ENCODE measurements at regions of chr2 and their contacts with region 1.

Region 1: DNA sequence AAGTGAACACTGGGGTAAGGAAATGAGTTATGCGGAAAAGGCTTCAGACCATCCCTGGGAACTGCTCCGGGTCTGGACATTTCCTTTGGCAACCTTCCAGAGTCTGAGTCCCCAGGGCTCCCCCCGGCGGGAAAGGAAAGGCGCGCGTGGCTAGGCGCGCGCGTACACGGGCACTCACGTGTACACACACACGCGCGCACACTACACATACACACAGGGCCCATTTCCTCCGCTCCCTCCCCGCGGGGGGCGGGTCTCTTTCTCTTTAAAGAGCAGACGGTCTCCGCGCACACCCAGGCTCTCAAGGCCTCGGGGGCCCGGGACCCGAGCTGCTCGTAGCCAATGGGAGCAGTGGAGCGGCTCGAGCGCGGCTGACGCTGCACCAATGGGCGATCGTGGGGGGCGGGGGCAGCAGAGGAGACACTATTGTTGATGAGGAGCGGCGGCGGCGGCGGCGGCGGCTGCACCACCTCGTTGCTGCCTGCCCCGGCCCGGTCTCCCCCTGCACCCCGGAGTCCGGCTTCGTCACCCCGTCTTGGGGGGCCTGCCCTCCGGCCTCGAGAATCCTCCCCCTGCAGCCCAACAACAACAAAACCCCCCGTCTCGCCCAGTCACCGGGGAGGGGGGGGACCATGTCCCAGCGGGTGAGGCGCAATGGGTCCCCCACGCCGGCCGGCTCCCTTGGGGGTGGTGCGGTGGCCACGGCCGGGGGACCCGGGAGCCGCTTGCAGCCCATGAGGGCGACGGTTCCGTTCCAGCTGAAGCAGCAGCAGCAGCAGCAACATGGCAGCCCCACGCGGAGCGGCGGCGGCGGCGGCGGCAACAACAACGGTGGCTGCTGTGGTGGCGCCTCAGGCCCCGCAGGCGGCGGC is at the start of gene FAM117B:
- DNase-seq: peak; percentile 99
- ATAC-seq: peak; percentile 88
- H3K4me3 Mint-ChIP-seq: peak within 1 kb of the TSS; percentile 83
- H3K27ac Mint-ChIP-seq: peak within 1 kb of the TSS; percentile 93
- H3K4me1 Mint-ChIP-seq: peaks cover 48% of the 10 kb centered on the region
- H3K27me3 Mint-ChIP-seq: no peaks in the 10 kb centered on the region
- total RNA-seq, gene FAM117B: 15.3 to 16.6 TPM

Region 2: GRCh38 chr2:201182650-201183364 is 1452.0 kb before region 1 on chr2 and contains the start of gene CASP10:
- CTCF ChIA-PET with region 1: no interaction called
- POLR2A ChIA-PET with region 1: no interaction called
- intact Hi-C with region 1: loop called in 1 of 2 experiments (anchors 5 kb)
- DNase-seq: no peak
- ATAC-seq: peak; percentile 66
- H3K4me3 Mint-ChIP-seq: peak within 1 kb of the TSS; percentile 86
- H3K27ac Mint-ChIP-seq: peak within 1 kb of the TSS; percentile 96
- H3K4me1 Mint-ChIP-seq: peaks cover 43% of the 10 kb centered on the region
- H3K27me3 Mint-ChIP-seq: no peaks in the 10 kb centered on the region
- total RNA-seq, gene CASP10: 12.2 to 16.8 TPM

Region 3: GRCh38 chr2:202278944-202279343 is 355.8 kb before region 1 on chr2:
- CTCF ChIA-PET with region 1: no interaction called
- POLR2A ChIA-PET with region 1: no interaction called
- intact Hi-C with region 1: loop called in 1 of 2 experiments (anchors 10 kb)
- DNase-seq: no peak
- ATAC-seq: no peak
- H3K4me3 Mint-ChIP-seq: no peak overlapping the region
- H3K27ac Mint-ChIP-seq: peak overlapping the region; percentile 84
- H3K4me1 Mint-ChIP-seq: peaks cover 46% of the 10 kb centered on the region
- H3K27me3 Mint-ChIP-seq: no peaks in the 10 kb centered on the region

Region 4: GRCh38 chr2:202335791-202336467 is 298.9 kb before region 1 on chr2:
- CTCF ChIA-PET with region 1: no interaction called
- POLR2A ChIA-PET with region 1: no interaction called
- intact Hi-C with region 1: no loop called
- DNase-seq: no peak
- ATAC-seq: no peak
- H3K4me3 Mint-ChIP-seq: no peak overlapping the region
- H3K27ac Mint-ChIP-seq: no peak overlapping the region
- H3K4me1 Mint-ChIP-seq: no peaks in the 10 kb centered on the region
- H3K27me3 Mint-ChIP-seq: no peaks in the 10 kb centered on the region

Region 5: GRCh38 chr2:202406445-202406967 is 228.3 kb before region 1 on chr2:
- CTCF ChIA-PET with region 1: no interaction called
- POLR2A ChIA-PET with region 1: no interaction called
- intact Hi-C with region 1: no loop called
- DNase-seq: no peak
- ATAC-seq: no peak
- H3K4me3 Mint-ChIP-seq: no peak overlapping the region
- H3K27ac Mint-ChIP-seq: no peak overlapping the region
- H3K4me1 Mint-ChIP-seq: peaks cover 3% of the 10 kb centered on the region
- H3K27me3 Mint-ChIP-seq: no peaks in the 10 kb centered on the region

Region 6: GRCh38 chr2:202671317-202672035 is 36.7 kb after region 1 on chr2:
- CTCF ChIA-PET with region 1: interaction called, 5 read pairs
- POLR2A ChIA-PET with region 1: interaction called, 9 read pairs
- intact Hi-C with region 1: loop called (anchors 2 kb)
- DNase-seq: no peak
- ATAC-seq: no peak
- H3K4me3 Mint-ChIP-seq: no peak overlapping the region
- H3K27ac Mint-ChIP-seq: no peak overlapping the region
- H3K4me1 Mint-ChIP-seq: peaks cover 78% of the 10 kb centered on the region
- H3K27me3 Mint-ChIP-seq: no peaks in the 10 kb centered on the region

Region 7: DNA sequence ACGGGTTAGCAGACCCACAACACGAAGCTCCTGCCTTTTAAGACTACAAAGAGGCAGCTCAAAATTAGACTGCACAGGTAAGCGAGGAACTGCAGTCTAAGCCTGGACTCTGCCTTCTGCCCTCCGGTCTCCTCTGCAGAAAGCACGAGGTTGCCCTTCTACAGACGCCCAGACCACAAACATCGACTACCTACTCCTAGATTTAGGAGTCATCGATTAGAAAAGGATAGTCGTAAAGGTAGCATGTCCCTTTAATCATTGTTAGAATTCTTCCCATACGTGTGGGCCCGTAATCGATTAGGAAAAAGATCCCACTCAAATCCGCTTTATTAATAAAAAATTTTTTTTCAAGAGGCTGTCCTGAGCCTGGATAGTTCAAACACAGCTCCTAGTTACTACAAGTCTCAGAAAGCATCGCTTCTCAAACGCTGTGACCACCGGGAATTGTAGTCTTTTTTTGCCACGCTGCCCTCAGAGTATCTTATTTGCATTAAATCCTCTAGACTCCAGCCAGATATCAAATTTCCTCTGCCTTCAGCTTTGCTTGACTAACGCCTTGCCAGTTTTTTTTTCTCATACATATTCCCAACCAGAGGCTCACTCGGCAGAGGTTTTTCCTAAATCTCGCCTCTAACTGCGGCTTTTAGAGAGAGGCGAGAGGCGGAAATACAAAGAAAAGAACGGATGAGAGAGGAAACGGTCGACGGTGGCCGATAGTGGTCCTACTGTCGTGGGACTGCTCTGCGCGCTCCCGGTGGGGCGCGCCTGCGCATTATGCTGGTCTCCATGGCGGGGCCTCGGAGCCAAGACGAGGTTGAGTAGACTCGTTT is 276.9 kb after region 1 on chr2 and contains the starts of genes CARF and WDR12:
- CTCF ChIA-PET with region 1: interaction called, 3 read pairs
- POLR2A ChIA-PET with region 1: interaction called, 4 read pairs
- intact Hi-C with region 1: loop called in 1 of 2 experiments (anchors 1 kb)
- DNase-seq: peak; percentile 96
- ATAC-seq: peak; percentile 84
- H3K4me3 Mint-ChIP-seq: peak within 1 kb of the TSS; percentile 84
- H3K27ac Mint-ChIP-seq: peak within 1 kb of the TSS; percentile 95
- H3K4me1 Mint-ChIP-seq: peaks cover 30% of the 10 kb centered on the region
- H3K27me3 Mint-ChIP-seq: no peaks in the 10 kb centered on the region
- total RNA-seq, gene CARF: 6.2 to 9.0 TPM
- total RNA-seq, gene WDR12: 92.5 to 129 TPM

Region 8: DNA sequence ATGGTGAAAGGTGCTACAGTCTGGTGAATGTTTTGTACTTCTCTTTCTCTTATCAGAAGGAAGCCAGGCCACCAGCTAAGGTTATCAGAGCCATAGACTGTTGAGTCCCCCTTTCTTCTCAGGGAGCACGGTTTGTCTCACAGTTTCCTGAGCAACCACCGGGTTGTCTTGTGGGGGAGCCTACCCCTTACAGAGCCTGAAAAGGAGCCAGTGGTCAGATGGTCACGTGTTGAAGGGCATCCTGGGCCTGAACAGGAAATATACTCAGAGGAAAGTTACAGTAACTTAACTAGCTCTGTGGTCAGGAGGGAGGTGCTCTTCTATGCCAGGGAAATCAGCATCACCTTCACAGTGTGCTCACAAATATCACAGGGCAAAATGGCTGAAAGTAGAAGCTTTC is 1083.3 kb after region 1 on chr2:
- CTCF ChIA-PET with region 1: no interaction called
- POLR2A ChIA-PET with region 1: no interaction called
- intact Hi-C with region 1: loop called in 1 of 2 experiments (anchors 10 kb)
- DNase-seq: peak; percentile 77
- ATAC-seq: peak; percentile 63
- H3K4me3 Mint-ChIP-seq: peak overlapping the region; percentile 63
- H3K27ac Mint-ChIP-seq: peak overlapping the region; percentile 95
- H3K4me1 Mint-ChIP-seq: peaks cover 97% of the 10 kb centered on the region
- H3K27me3 Mint-ChIP-seq: no peaks in the 10 kb centered on the region

Region 9: GRCh38 chr2:203940039-203940438 is 1305.2 kb after region 1 on chr2:
- CTCF ChIA-PET with region 1: no interaction called
- POLR2A ChIA-PET with region 1: no interaction called
- intact Hi-C with region 1: loop called in 1 of 2 experiments (anchors 2 kb)
- DNase-seq: no peak
- ATAC-seq: peak; percentile 7
- H3K4me3 Mint-ChIP-seq: peak overlapping the region; percentile 87
- H3K27ac Mint-ChIP-seq: peak overlapping the region; percentile 98
- H3K4me1 Mint-ChIP-seq: peaks cover 53% of the 10 kb centered on the region
- H3K27me3 Mint-ChIP-seq: no peaks in the 10 kb centered on the region

Measured in activated CD4-positive, alpha-beta T cell treated with anti-CD3 and anti-CD28 coated beads for 36 hours (primary cell).